Right lobe of liver (tissue), 6 donors: ENCODE measurements at regions of chr7 and their contacts with region 1.

Region 1: DNA sequence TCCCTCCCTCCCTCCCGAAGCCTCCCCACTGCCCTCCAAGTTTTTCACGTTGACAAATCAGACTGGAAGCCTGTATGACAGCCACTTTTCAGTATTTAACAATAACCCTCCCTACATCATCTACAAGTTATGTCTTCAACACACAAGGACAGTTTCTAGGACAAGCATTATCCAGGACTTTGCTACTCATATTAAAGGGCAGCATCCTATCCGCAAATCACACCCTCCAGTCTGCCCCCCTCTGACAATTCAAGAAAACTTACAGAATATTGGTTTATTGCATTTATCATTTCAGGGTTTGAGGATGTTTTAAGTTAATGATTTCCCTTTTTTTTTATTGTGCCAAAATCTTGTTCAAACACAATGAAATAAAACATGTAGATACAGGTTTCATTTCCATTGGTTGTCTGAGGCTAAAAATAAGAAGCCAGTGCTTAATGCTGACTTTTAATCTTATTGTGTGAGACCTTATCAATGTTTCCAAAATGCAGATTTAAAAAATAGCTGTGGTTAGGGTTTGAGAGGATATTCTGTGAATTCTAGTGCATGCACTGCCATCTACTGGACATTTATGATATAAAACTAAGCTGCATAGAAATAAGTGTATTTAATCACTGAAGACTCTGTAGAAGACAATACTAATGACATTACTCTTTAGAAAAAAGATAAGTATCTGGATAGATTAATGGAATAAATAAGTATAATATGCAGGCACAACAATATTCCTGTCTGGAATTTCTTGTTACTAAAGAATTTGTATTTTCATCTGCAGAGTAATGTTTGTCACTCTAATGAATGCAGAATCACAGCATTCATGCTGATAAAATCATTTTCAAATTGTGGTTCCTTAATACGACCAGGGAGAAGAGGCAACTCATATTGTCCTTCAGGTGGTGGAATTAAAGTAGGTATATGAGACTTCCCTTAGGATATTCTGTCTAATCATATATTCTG is 64.1 kb downstream of the CAV1 start:
- DNase-seq: no peak
- ATAC-seq: peak; percentile 57 to 65 (median 62)
- H3K4me3 ChIP-seq: no peak overlapping the region
- H3K27ac ChIP-seq: no peak overlapping the region
- H3K4me1 ChIP-seq: peaks cover 0 to 12% (median 0%) of the 10 kb centered on the region in 4 donors
- H3K27me3 ChIP-seq: no peaks in the 10 kb centered on the region
- CTCF ChIP-seq: peak; percentile 71 to 88 (median 76)
- POLR2A ChIP-seq: no peak

Region 2: DNA sequence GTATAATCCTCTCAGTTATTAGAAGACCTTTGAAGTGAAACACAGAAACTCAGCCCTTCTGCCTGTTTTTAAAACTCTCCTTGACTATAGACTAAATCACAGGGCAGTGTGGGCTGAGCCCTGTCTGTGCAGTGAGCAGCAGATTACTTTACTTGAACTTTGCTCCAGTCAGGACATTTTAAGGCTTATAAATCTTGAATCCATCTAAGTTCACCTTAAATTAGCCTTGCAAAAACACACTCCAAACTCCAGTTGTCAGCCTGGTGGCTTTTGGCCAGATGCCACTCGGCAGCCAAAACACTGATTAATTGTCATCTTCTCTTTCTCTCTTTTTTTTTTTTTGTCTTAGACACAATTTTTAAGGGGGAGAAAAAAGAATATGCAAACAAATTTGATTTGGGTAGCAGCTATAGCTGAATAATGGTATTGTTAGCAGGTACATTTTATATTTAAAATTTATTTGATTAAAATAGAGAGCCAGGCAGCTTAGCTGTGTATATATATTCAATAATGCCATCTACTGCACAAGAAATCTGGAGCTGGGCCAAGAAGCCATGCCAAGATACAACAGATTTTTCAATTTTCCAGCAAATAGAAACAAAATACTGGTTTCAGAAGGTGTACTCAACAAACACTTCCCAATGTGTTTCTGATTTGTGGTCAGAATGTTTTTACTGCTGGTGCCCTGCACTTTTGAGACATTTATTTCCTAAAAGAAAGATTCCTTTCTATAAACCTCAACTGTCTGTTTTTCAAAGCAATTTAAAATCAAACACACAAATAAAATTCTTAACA is 806.0 kb before region 1 on chr7:
- intact Hi-C with region 1: no loop called
- DNase-seq: no peak
- ATAC-seq: no peak
- H3K4me3 ChIP-seq: no peak overlapping the region
- H3K27ac ChIP-seq: no peak overlapping the region
- H3K4me1 ChIP-seq: no peaks in the 10 kb centered on the region
- H3K27me3 ChIP-seq: no peaks in the 10 kb centered on the region
- CTCF ChIP-seq: no peak
- POLR2A ChIP-seq: no peak

Region 3: DNA sequence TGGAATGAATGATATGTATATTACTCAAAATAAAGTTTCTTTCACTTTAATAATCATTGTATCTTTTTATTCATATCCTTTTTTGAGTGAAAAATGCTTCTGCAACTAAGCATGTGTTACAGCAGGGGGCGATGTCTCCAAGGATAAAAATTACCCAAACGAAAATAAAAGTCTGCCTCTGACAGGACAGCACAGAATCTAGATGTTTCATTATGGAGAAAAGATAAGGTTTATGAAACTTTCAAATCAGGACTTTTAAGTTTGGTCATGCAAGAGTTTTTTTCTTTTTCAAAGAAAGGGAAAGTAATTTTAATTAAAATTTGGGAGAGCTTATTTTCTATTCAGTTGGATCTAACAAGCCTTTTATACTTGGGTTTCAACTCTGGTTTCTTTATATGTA is 330.2 kb before region 1 on chr7:
- intact Hi-C with region 1: loop called (anchors 5 to 10 kb)
- DNase-seq: no peak
- ATAC-seq: peak; percentile 81 to 91 (median 82)
- H3K4me3 ChIP-seq: no peak overlapping the region
- H3K27ac ChIP-seq: no peak overlapping the region
- H3K4me1 ChIP-seq: peaks cover 0 to 4% (median 0%) of the 10 kb centered on the region in 4 donors
- H3K27me3 ChIP-seq: no peaks in the 10 kb centered on the region
- CTCF ChIP-seq: peak; percentile 65 to 93 (median 74)
- POLR2A ChIP-seq: no peak

Region 4: GRCh38 chr7:116380025-116380424 is 208.9 kb before region 1 on chr7:
- intact Hi-C with region 1: no loop called
- DNase-seq: no peak
- ATAC-seq: no peak
- H3K4me3 ChIP-seq: no peak overlapping the region
- H3K27ac ChIP-seq: no peak overlapping the region
- H3K4me1 ChIP-seq: no peaks in the 10 kb centered on the region
- H3K27me3 ChIP-seq: no peaks in the 10 kb centered on the region
- CTCF ChIP-seq: no peak
- POLR2A ChIP-seq: no peak

Region 5: DNA sequence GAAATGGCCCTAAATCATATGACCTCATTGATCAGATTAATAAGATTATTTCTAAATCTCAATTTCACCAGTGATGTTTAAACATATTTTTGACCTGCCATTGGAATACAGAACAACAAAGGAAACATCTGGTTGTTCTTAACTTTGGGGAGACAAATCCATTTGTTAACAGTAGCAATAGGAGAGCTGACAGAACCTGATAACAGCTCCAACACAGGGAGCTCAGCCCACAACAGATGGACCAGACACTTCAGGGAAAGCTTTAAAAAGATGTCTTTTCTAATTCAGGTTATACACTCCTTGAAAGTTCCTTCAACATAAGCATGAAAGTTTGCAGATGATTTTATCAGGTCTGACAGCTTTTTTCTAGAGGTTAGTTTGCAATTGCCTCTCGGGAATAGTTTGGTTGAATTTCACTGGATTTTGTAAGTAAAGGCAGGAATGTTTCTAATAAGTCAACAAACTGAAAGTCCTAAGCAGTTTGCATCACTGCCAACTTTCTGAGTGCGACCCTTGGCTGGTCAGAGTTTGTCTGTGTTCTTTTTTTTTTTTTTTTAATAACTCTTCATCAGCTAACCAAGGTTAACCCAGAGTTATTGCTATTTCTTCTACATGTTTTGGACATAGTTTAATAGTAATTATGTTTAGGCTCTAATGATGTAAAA is 76.5 kb after region 1 on chr7:
- intact Hi-C with region 1: loop called in 1 of 2 experiments (anchors 10 kb)
- DNase-seq: peak in 1 of 3 donors; percentile 55
- ATAC-seq: peak; percentile 35 to 77 (median 56)
- H3K4me3 ChIP-seq: no peak overlapping the region
- H3K27ac ChIP-seq: no peak overlapping the region
- H3K4me1 ChIP-seq: peaks cover 0 to 3% (median 0%) of the 10 kb centered on the region in 4 donors
- H3K27me3 ChIP-seq: no peaks in the 10 kb centered on the region
- CTCF ChIP-seq: no peak
- POLR2A ChIP-seq: no peak

Region 6: DNA sequence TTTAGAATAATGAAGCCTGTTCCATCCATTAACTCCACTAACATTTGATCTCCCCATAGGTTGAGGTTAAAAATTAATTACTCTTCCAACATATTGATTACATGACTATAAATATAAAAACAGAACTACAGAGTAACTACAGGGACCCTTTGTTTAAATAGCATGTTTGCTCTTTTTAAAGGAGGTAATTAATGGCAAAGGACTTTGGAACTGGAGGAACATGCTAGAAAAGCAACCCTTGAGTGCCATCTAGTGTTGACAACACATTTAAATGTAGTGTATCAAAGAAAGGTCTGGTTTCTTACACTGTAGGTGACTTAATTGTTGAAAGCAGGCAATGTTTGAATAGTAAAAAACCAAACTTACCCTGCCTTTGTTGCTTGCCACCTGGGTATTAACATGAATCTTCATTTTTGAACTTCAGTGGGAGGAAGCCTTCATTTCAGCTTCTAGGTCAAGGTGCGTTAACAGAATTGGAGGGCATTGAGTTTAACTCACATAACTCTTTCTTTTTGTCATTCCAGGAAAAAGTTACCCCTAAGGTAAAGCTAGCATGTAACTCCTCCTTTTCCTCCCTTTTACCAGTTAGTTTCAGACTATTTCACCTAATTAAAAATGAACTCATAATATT is 220.8 kb after region 1 on chr7:
- intact Hi-C with region 1: loop called (anchors 10 kb)
- DNase-seq: no peak
- ATAC-seq: peak; percentile 70 to 83 (median 75)
- H3K4me3 ChIP-seq: peak overlapping the region in 1 of 3 donors; percentile 49
- H3K27ac ChIP-seq: peak overlapping the region; percentile 43 to 91 (median 91)
- H3K4me1 ChIP-seq: peaks cover 0 to 40% (median 14%) of the 10 kb centered on the region in 4 donors
- H3K27me3 ChIP-seq: no peaks in the 10 kb centered on the region
- CTCF ChIP-seq: peak; percentile 58 to 80 (median 68)
- POLR2A ChIP-seq: no peak